A673 (cell line): ENCODE measurements at regions of chr12 and their contacts with region 1.

Region 1: DNA sequence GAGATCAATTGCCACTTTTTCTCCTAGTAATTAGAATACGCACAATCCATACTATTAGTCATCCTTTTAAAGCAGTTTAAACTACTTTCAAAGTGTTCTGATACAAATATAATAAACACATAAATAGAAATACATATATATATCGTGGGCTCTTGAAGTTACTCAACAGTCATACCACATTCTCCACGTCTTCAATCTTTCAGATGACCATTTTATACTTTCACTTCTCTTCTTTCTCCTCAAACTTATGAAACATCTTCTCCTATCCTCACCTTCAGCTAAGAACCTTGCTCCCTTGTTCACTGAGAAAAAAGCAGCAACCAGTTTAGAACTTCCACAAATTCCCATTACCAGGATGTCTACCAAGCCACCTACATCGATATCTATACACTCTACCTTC is 19.2 kb downstream of the CEP290 start:
- DNase-seq: no peak
- H3K4me3 ChIP-seq: no peak overlapping the region
- H3K27ac ChIP-seq: no peak overlapping the region
- H3K4me1 ChIP-seq: no peaks in the 10 kb centered on the region
- H3K27me3 ChIP-seq: no peaks in the 10 kb centered on the region
- CTCF ChIP-seq: no peak

Region 2: GRCh38 chr12:88921434-88921833 is 798.8 kb after region 1 on chr12:
- CTCF ChIA-PET with region 1: no interaction called
- POLR2A ChIA-PET with region 1: interaction called, 22 read pairs
- intact Hi-C with region 1: no loop called
- DNase-seq: no peak
- H3K4me3 ChIP-seq: no peak overlapping the region
- H3K27ac ChIP-seq: no peak overlapping the region
- H3K4me1 ChIP-seq: no peaks in the 10 kb centered on the region
- H3K27me3 ChIP-seq: no peaks in the 10 kb centered on the region
- CTCF ChIP-seq: no peak